ENCODE measurements at regions of chr21 and their contacts with region 1.

Region 1: DNA sequence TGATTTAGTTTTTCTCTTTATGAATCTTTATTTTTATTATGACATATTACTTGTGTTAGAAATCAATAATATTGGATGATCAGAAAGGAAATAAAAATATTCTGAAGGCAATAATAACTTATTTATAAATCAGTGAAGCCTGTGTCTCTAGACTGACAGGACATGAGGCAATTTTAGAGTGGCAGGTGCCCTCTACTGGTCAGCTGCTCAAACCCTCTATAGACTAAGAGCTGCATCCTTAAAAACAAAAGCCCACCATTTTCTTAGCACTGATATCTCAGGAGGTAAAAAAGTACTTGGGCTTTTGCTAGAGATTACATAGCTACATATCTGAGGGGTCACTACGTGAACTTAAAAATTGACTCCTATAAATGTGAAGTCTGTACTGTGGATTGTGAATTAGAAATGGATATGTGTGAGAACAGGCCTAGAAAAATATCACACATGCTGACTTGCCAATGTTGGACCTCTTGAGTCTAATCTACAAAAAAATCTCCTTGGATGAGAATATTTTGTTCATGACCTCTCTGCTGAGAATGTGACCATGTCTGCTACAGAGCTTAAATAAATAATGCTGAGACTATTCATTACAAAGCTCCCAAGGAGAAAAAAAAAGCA is 597.9 kb upstream of the ADAMTS5 start:
- DNase-seq: peak; percentile 52
- ATAC-seq: peak; percentile 99
- H3K4me3 ChIP-seq: no peak overlapping the region
- H3K27ac ChIP-seq: no peak overlapping the region
- H3K4me1 ChIP-seq: peaks cover 1% of the 10 kb centered on the region
- H3K27me3 ChIP-seq: no peaks in the 10 kb centered on the region
- CTCF ChIP-seq: peak; percentile 80

Region 2: GRCh38 chr21:26385721-26386120 is 1179.1 kb before region 1 on chr21:
- CTCF ChIA-PET with region 1: no interaction called
- POLR2A ChIA-PET with region 1: no interaction called
- intact Hi-C with region 1: no loop called
- DNase-seq: peak; percentile 63
- ATAC-seq: no peak
- H3K4me3 ChIP-seq: no peak overlapping the region
- H3K27ac ChIP-seq: peak overlapping the region; percentile 16; the same call in 1 of the 2 replicates
- H3K4me1 ChIP-seq: peaks cover 29% of the 10 kb centered on the region
- H3K27me3 ChIP-seq: no peaks in the 10 kb centered on the region
- CTCF ChIP-seq: no peak

Region 3: GRCh38 chr21:26850108-26850643 is 714.6 kb before region 1 on chr21:
- CTCF ChIA-PET with region 1: no interaction called
- POLR2A ChIA-PET with region 1: no interaction called
- intact Hi-C with region 1: loop called (anchors 1 kb)
- DNase-seq: peak; percentile 80
- ATAC-seq: no peak
- H3K4me3 ChIP-seq: no peak overlapping the region
- H3K27ac ChIP-seq: no peak overlapping the region
- H3K4me1 ChIP-seq: peaks cover 5% of the 10 kb centered on the region; the same call in 1 of the 2 replicates
- H3K27me3 ChIP-seq: no peaks in the 10 kb centered on the region
- CTCF ChIP-seq: peak; percentile 70

Region 4: GRCh38 chr21:26967062-26967913 is 597.5 kb before region 1 on chr21 and contains the start of gene ADAMTS5:
- CTCF ChIA-PET with region 1: no interaction called
- POLR2A ChIA-PET with region 1: no interaction called
- intact Hi-C with region 1: loop called (anchors 10 kb)
- DNase-seq: peak; percentile 14
- ATAC-seq: peak; percentile 80
- H3K4me3 ChIP-seq: peak within 1 kb of the TSS; percentile 63
- H3K27ac ChIP-seq: no peak within 1 kb of the TSS
- H3K4me1 ChIP-seq: no peaks in the 10 kb centered on the region
- H3K27me3 ChIP-seq: peaks cover 18% of the 10 kb centered on the region
- CTCF ChIP-seq: no peak
- total RNA-seq, gene ADAMTS5: not detected in 2 replicates

Region 5: GRCh38 chr21:27362249-27362648 is 202.5 kb before region 1 on chr21:
- CTCF ChIA-PET with region 1: no interaction called
- POLR2A ChIA-PET with region 1: no interaction called
- intact Hi-C with region 1: loop called (anchors 1 kb)
- DNase-seq: peak; percentile 12
- ATAC-seq: peak; percentile 79
- H3K4me3 ChIP-seq: no peak overlapping the region
- H3K27ac ChIP-seq: no peak overlapping the region
- H3K4me1 ChIP-seq: no peaks in the 10 kb centered on the region
- H3K27me3 ChIP-seq: no peaks in the 10 kb centered on the region
- CTCF ChIP-seq: no peak; the same call in 1 of the 2 replicates

Region 6: DNA sequence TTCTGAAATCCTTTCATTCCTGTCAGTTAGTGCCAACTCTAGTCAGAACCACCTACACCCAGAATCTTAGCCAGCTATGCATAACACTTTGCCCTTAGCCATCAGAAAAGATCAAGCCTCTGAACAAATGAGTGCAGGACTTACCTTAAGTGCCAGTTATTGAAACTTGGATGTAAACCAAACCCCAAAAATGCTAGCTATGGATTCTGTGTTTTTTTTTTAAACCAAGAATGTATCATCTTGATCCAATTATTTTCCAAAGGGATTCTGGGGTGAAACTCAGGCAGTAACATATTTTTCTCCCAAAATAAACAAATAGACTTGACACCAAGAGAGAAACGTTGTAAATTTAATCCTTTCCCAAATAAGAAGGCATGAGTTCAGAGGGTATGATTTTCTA is 59.3 kb before region 1 on chr21:
- CTCF ChIA-PET with region 1: no interaction called
- POLR2A ChIA-PET with region 1: no interaction called
- intact Hi-C with region 1: no loop called
- DNase-seq: no peak
- ATAC-seq: no peak
- H3K4me3 ChIP-seq: no peak overlapping the region
- H3K27ac ChIP-seq: no peak overlapping the region
- H3K4me1 ChIP-seq: no peaks in the 10 kb centered on the region
- H3K27me3 ChIP-seq: no peaks in the 10 kb centered on the region
- CTCF ChIP-seq: no peak

Region 7: DNA sequence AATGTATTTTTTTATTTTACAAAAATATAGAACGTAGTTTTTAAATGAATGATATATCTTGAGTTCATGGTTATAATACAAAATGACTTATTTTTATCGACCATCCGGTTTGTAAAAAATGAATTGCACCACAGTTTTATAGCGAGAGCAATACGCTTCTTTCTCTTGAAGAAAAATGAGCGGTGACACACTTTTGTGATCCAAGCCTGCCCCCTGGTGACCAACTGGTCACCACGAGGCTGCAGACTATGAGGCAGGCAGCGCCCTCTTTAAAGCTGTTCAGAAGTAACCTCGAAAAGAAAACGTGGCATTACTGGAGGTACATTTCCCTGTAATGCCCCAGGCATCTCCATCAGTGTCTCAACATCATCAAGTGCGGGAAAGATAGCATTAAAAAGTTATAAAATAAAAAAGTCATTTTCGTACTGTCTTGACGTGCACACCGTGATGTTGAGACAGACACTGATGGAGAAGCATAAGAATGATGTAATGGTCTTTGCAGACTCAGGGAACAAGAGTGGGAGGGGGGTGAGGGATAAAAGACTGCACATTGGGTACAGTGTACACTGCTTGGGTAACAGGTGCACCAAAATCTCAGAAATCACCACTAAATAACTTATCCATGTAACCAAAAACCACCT is 136.3 kb after region 1 on chr21:
- CTCF ChIA-PET with region 1: interaction called, 9 read pairs
- POLR2A ChIA-PET with region 1: no interaction called
- intact Hi-C with region 1: loop called (anchors 2 kb)
- DNase-seq: peak; percentile 87
- ATAC-seq: peak; percentile 97
- H3K4me3 ChIP-seq: no peak overlapping the region
- H3K27ac ChIP-seq: no peak overlapping the region
- H3K4me1 ChIP-seq: no peaks in the 10 kb centered on the region
- H3K27me3 ChIP-seq: no peaks in the 10 kb centered on the region
- CTCF ChIP-seq: peak; percentile 96